HepG2 (cell line): ENCODE measurements at regions of chr16 and their contacts with region 1.

Region 1: DNA sequence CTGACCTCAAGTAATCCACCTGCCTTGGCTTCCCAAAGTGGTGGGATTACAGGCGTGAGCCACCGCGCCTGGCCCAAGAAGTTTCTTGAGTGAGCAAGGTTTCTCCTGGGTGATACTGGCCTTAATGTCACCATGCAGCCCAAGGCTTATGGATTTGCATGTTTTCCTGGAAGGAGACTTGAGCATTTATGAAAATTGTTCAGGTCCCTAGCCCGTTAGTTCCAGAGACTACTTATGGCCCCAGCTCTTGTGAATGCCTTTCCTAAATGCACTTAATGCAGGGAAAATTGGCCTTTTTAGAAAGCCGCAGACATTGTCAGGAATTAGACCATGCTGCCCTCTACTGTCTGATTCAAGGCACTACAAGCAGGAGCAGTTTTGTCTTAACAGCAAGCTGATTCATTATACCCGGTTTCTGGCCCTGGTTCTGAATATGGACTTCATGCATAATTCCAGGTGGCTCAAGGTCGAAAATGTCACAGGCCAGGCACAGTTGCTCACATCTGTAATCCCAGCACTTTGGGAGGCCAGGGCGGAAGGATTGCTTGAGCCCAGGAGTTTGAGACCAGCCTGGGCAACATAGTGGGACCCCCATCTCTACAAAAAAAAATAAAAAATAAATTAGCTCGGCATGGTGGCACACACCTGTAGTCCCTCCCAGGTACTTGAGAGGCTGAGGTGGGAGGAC is 91.3 kb downstream of the SNX29 start:
- DNase-seq: peak; percentile 84
- ATAC-seq: peak; percentile 85
- H3K4me3 ChIP-seq: no peak overlapping the region
- H3K27ac ChIP-seq: no peak overlapping the region
- H3K4me1 ChIP-seq: 0 out of 2 replicates have a peak, but pooled peaks cover 4% of the 10 kb centered on the region
- H3K27me3 ChIP-seq: no peaks in the 10 kb centered on the region
- CTCF ChIP-seq: peak; percentile 99
- EP300 ChIP-seq: no peak
- POLR2A ChIP-seq: no peak
- RAD21 ChIP-seq: peak; percentile 98

Region 2: GRCh38 chr16:11915644-11916523 is 152.0 kb before region 1 on chr16 and contains the start of gene GSPT1:
- CTCF ChIA-PET with region 1: no interaction called
- POLR2A ChIA-PET with region 1: no interaction called
- in situ Hi-C with region 1: no loop called
- intact Hi-C with region 1: loop called (anchors 2 kb)
- DNase-seq: peak; percentile 99
- ATAC-seq: peak; percentile 92
- H3K4me3 ChIP-seq: peak within 1 kb of the TSS; percentile 74 to 98 (median 97)
- H3K27ac ChIP-seq: peak within 1 kb of the TSS; percentile 94
- H3K4me1 ChIP-seq: peaks cover 48% of the 10 kb centered on the region
- H3K27me3 ChIP-seq: no peaks in the 10 kb centered on the region; a peak in 1 of 5 replicates
- CTCF ChIP-seq: peak; percentile 52
- EP300 ChIP-seq: peak; percentile 8 to 53; a peak in 1 of 4 replicates
- POLR2A ChIP-seq: peak; percentile 80 to 97
- RAD21 ChIP-seq: peak; percentile 52
- total RNA-seq, gene GSPT1: 316 and 449 TPM in 2 replicates

Region 3: DNA sequence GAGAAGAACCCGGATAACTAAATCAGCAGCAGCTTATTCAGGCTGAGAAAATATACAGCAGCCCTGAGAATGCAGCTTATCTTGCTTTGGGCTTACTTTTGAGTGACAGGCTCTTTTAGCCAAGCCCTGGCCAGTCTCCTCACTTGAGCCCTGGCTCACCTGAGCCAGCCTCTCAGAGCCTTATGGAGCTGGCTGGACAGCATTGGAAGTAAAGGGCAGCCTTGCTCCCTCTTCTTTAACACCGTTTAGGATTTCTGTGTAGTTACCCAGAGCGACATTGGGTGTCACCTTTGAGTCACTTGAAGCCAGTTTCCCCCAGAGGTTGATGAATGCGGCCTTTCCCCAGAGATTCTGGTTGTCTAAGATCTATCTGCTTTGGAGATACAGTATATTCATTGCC is 118.3 kb before region 1 on chr16:
- CTCF ChIA-PET with region 1: interaction called, 59 read pairs
- POLR2A ChIA-PET with region 1: interaction called, 3 read pairs
- in situ Hi-C with region 1: no loop called
- intact Hi-C with region 1: loop called (anchors 1 kb)
- DNase-seq: peak; percentile 73
- ATAC-seq: peak; percentile 97
- H3K4me3 ChIP-seq: no peak overlapping the region
- H3K27ac ChIP-seq: no peak overlapping the region
- H3K4me1 ChIP-seq: peaks cover 25% of the 10 kb centered on the region; the same call in 1 of the 2 replicates
- H3K27me3 ChIP-seq: peaks cover 0 to 12% of the 10 kb centered on the region in 2 experiments; a peak in 2 of 5 replicates
- CTCF ChIP-seq: peak; percentile 93
- EP300 ChIP-seq: 0 out of 4 replicates have a peak, but pooled peaks of 1 of the 2 experiments have one; percentile 19
- POLR2A ChIP-seq: no peak
- RAD21 ChIP-seq: peak; percentile 77

Region 4: GRCh38 chr16:11972128-11972527 is 95.7 kb before region 1 on chr16:
- CTCF ChIA-PET with region 1: interaction called, 43 read pairs
- POLR2A ChIA-PET with region 1: interaction called, 8 read pairs
- in situ Hi-C with region 1: loop called (anchors 5 kb)
- intact Hi-C with region 1: loop called (anchors 1 kb)
- DNase-seq: peak; percentile 72
- ATAC-seq: peak; percentile 48
- H3K4me3 ChIP-seq: peak overlapping the region in 1 of 3 experiments; percentile 1; a peak in 1 of 6 replicates
- H3K27ac ChIP-seq: no peak overlapping the region
- H3K4me1 ChIP-seq: peaks cover 30% of the 10 kb centered on the region
- H3K27me3 ChIP-seq: peaks cover 3 to 5% of the 10 kb centered on the region in 2 experiments; a peak in 4 of 5 replicates
- CTCF ChIP-seq: peak; percentile 75
- EP300 ChIP-seq: no peak
- POLR2A ChIP-seq: no peak
- RAD21 ChIP-seq: peak; percentile 78

Region 5: DNA sequence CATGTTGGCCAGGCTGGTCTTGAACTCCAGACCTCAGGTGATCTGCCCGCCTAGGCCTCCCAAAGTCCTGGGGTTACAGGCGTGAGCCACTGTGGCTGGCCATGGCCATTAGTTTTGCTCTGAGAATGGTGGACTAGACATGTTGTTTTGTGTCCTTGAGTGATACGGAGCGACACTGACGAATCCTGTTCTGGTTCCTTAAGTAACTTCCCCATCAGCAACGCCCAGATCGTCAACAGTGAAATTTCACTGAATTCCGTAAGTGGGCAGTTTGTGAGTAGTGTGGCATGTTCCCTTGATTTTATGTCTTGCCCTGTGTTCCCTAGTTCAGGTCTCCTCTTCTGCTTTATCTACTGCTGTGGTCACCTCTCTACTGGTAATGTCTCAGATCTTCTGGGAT is 23.9 kb before region 1 on chr16:
- CTCF ChIA-PET with region 1: no interaction called
- POLR2A ChIA-PET with region 1: no interaction called
- in situ Hi-C with region 1: no loop called
- intact Hi-C with region 1: no loop called
- DNase-seq: no peak
- ATAC-seq: no peak
- H3K4me3 ChIP-seq: no peak overlapping the region
- H3K27ac ChIP-seq: no peak overlapping the region
- H3K4me1 ChIP-seq: peaks cover 11% of the 10 kb centered on the region
- H3K27me3 ChIP-seq: no peaks in the 10 kb centered on the region
- CTCF ChIP-seq: no peak
- EP300 ChIP-seq: no peak
- POLR2A ChIP-seq: no peak
- RAD21 ChIP-seq: no peak

Region 6: DNA sequence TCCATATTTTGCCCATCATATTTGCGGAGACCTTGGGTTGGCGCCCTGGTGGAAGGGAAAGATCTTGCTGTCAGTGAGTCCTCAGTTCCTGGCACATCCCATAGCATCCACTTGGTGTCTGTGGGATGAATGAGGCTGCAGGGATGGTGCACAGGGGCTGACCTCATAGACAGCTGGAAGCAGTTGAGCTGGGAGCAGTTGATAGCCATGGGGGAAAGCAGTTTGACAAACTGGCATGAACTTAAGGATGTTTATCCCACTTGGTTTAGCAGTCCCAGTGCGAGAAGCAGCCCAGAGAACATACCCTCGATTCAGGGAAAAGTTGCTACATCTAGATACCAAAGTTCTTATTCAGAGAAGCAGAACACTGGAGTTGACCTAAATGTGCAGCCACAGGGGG is 10.6 kb before region 1 on chr16:
- CTCF ChIA-PET with region 1: no interaction called
- POLR2A ChIA-PET with region 1: no interaction called
- in situ Hi-C with region 1: no loop called
- intact Hi-C with region 1: no loop called
- DNase-seq: no peak
- ATAC-seq: 0 out of 3 replicates have a peak, but pooled peaks have one; percentile 18
- H3K4me3 ChIP-seq: no peak overlapping the region
- H3K27ac ChIP-seq: no peak overlapping the region
- H3K4me1 ChIP-seq: peaks cover 16% of the 10 kb centered on the region
- H3K27me3 ChIP-seq: no peaks in the 10 kb centered on the region
- CTCF ChIP-seq: no peak
- EP300 ChIP-seq: no peak
- POLR2A ChIP-seq: no peak
- RAD21 ChIP-seq: no peak